ENCODE measurements at regions of chr2 and their contacts with region 1.

Region 1: GRCh38 chr2:2542966-2543611 is 212.0 kb upstream of the MYT1L start:
- DNase-seq: no peak
- H3K4me3 ChIP-seq: no peak overlapping the region
- H3K27ac ChIP-seq: no peak overlapping the region
- H3K4me1 ChIP-seq: no peaks in the 10 kb centered on the region
- H3K27me3 ChIP-seq: peaks cover 0 to 7% of the 10 kb centered on the region in 2 donors
- CTCF ChIP-seq: no peak
- POLR2A ChIP-seq: no peak

Region 2: DNA sequence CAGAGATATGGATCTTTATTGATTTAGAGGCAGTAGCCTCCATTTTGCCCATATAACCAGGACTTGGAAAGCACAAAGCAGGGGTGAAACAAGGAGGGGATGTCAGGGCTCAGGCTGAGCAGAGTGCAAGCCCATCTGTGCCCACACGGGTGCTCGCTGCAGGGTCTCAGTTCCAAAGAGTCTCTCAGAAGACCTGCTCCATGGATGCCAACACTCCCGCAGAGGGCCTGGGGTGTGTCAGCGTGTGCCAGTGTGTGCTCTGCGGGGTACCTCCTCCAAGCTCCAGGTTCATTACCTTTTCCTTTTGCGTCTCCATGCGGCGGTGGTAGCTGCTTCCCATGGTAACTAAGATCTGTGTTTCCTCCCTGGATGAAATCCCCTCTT is 727.0 kb after region 1 on chr2:
- intact Hi-C with region 1: loop called (anchors 5 kb)
- DNase-seq: no peak
- H3K4me3 ChIP-seq: no peak overlapping the region
- H3K27ac ChIP-seq: no peak overlapping the region
- H3K4me1 ChIP-seq: no peaks in the 10 kb centered on the region
- H3K27me3 ChIP-seq: no peaks in the 10 kb centered on the region
- CTCF ChIP-seq: no peak
- POLR2A ChIP-seq: no peak

Measured in breast epithelium (tissue), 4 donors.